Endothelial cell of umbilical vein (primary cell): ENCODE measurements at regions of chr2 and their contacts with region 1.

Region 1: GRCh38 chr2:56183643-56184499 is at the start of gene CCDC85A:
- DNase-seq: peak; percentile 86
- H3K4me3 ChIP-seq: peak within 1 kb of the TSS; percentile 50 to 92 (median 84)
- H3K27ac ChIP-seq: peak within 1 kb of the TSS; percentile 14
- H3K4me1 ChIP-seq: peaks cover 16% of the 10 kb centered on the region
- H3K27me3 ChIP-seq: no peaks in the 10 kb centered on the region
- CTCF ChIP-seq: peak; percentile 93 to 96
- POLR2A ChIP-seq: no peak
- total RNA-seq, gene CCDC85A: 10.4 and 16.9 TPM in 2 replicates

Region 2: GRCh38 chr2:56209701-56210100 is 25.8 kb after region 1 on chr2:
- CTCF ChIA-PET with region 1: no interaction called
- POLR2A ChIA-PET with region 1: no interaction called
- dilution Hi-C with region 1: no loop called
- intact Hi-C with region 1: no loop called
- DNase-seq: no peak
- H3K4me3 ChIP-seq: no peak overlapping the region
- H3K27ac ChIP-seq: no peak overlapping the region
- H3K4me1 ChIP-seq: peaks cover 18% of the 10 kb centered on the region
- H3K27me3 ChIP-seq: no peaks in the 10 kb centered on the region
- CTCF ChIP-seq: no peak
- POLR2A ChIP-seq: no peak

Region 3: GRCh38 chr2:56288838-56289580 is 105.1 kb after region 1 on chr2:
- CTCF ChIA-PET with region 1: no interaction called
- POLR2A ChIA-PET with region 1: no interaction called
- dilution Hi-C with region 1: no loop called
- intact Hi-C with region 1: loop called (anchors 5 kb)
- DNase-seq: no peak
- H3K4me3 ChIP-seq: no peak overlapping the region
- H3K27ac ChIP-seq: no peak overlapping the region
- H3K4me1 ChIP-seq: peaks cover 9% of the 10 kb centered on the region
- H3K27me3 ChIP-seq: no peaks in the 10 kb centered on the region
- CTCF ChIP-seq: no peak
- POLR2A ChIP-seq: no peak

Region 4: DNA sequence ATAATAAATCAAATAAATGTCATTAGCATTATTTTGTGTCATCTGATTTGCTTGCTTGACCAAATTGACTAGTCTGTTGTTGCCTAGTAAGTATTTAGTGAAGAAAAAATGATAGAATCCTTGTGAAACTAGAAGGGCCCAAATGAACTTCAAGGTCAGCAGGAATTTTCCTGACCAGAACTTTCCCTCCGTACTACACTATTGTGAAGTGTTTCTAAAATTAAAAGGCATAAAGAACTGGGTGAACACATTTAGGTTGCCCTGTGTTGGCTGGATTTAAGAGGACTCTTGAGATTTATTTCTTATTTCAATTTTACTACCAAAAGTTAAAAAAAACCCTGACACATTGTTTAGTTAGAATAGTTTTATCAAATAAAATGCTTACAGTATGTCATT is 142.5 kb after region 1 on chr2:
- CTCF ChIA-PET with region 1: no interaction called
- POLR2A ChIA-PET with region 1: no interaction called
- dilution Hi-C with region 1: no loop called
- intact Hi-C with region 1: no loop called
- DNase-seq: no peak
- H3K4me3 ChIP-seq: no peak overlapping the region
- H3K27ac ChIP-seq: no peak overlapping the region
- H3K4me1 ChIP-seq: no peaks in the 10 kb centered on the region
- H3K27me3 ChIP-seq: no peaks in the 10 kb centered on the region
- CTCF ChIP-seq: no peak
- POLR2A ChIP-seq: no peak

Region 5: DNA sequence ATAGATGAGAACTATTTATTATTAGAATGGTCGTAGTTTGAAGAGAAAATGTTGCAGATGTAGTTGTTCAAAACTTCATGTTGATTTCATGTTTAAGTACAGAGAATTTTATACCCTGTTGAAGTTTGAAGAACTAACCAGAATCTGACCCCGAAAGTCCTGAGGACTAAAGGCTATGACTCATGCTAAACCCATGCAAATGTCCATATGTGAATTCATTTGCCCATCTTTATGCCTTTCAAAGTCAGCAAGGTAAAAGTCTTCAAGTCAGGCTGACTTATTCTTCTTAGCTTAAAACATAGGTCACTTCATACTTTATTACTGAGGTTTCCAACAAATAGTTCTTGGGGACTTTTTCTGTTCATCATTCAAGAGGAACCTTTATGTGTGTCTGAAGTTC is 185.4 kb after region 1 on chr2:
- CTCF ChIA-PET with region 1: no interaction called
- POLR2A ChIA-PET with region 1: no interaction called
- dilution Hi-C with region 1: no loop called
- intact Hi-C with region 1: no loop called
- DNase-seq: no peak
- H3K4me3 ChIP-seq: no peak overlapping the region
- H3K27ac ChIP-seq: no peak overlapping the region
- H3K4me1 ChIP-seq: peaks cover 3% of the 10 kb centered on the region
- H3K27me3 ChIP-seq: no peaks in the 10 kb centered on the region
- CTCF ChIP-seq: no peak
- POLR2A ChIP-seq: no peak

Region 6: GRCh38 chr2:56589835-56590234 is 406.0 kb after region 1 on chr2:
- CTCF ChIA-PET with region 1: no interaction called
- POLR2A ChIA-PET with region 1: no interaction called
- dilution Hi-C with region 1: no loop called
- intact Hi-C with region 1: loop called (anchors 10 kb)
- DNase-seq: no peak
- H3K4me3 ChIP-seq: no peak overlapping the region
- H3K27ac ChIP-seq: no peak overlapping the region
- H3K4me1 ChIP-seq: peaks cover 2% of the 10 kb centered on the region
- H3K27me3 ChIP-seq: no peaks in the 10 kb centered on the region
- CTCF ChIP-seq: no peak
- POLR2A ChIP-seq: no peak

Region 7: GRCh38 chr2:56741601-56742102 is 557.8 kb after region 1 on chr2:
- CTCF ChIA-PET with region 1: interaction called, 20 read pairs
- POLR2A ChIA-PET with region 1: no interaction called
- dilution Hi-C with region 1: no loop called
- intact Hi-C with region 1: no loop called
- DNase-seq: peak; percentile 67
- H3K4me3 ChIP-seq: no peak overlapping the region
- H3K27ac ChIP-seq: peak overlapping the region; percentile 12
- H3K4me1 ChIP-seq: no peaks in the 10 kb centered on the region
- H3K27me3 ChIP-seq: no peaks in the 10 kb centered on the region
- CTCF ChIP-seq: no peak
- POLR2A ChIP-seq: no peak

Region 8: DNA sequence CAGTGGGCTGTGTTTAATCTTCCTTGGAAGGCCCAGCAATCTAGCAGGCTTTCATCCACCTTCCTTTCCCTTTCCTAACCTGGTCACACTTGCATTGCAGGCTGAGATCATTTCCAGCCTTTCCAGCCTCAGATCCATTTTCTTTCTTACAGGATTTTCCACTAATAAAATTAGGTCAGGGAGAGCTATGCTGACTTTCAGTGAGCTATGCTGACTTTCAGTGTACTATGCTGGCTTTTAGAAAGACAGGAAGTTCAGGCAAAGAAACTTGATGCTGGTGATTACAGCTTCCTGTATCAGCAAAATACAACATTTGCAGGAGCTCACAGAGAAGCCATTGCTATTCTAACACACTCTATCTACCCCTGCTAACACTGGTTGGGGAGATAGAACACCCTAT is 734.9 kb after region 1 on chr2:
- CTCF ChIA-PET with region 1: no interaction called
- POLR2A ChIA-PET with region 1: no interaction called
- dilution Hi-C with region 1: no loop called
- intact Hi-C with region 1: loop called (anchors 5 kb)
- DNase-seq: no peak
- H3K4me3 ChIP-seq: no peak overlapping the region
- H3K27ac ChIP-seq: no peak overlapping the region
- H3K4me1 ChIP-seq: no peaks in the 10 kb centered on the region
- H3K27me3 ChIP-seq: no peaks in the 10 kb centered on the region
- CTCF ChIP-seq: no peak
- POLR2A ChIP-seq: no peak

Region 9: DNA sequence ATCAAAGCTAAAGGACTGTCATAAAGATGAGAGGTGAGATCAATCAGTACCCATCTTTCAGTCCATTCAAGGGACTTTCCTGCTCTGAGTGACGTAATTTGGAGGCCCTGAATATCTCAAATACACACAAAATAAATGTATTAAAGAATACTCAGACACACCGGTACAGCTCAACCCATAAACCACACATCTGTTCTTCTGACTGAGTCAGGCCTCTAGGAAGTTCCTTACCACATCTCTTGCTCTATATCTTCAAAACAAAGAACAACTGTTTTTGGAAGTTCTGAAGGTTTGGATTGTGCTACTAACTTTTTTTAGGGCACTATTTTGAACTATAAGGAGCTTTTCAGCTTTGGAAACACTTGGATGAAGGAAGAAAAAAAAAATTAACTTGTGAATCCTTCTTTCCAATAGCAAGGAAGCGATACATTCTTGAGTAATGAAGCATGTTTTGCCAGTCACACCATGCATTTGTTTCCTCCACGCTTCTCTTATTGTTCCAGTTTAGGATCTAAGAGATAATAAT is 996.2 kb after region 1 on chr2:
- CTCF ChIA-PET with region 1: interaction called, 12 read pairs
- POLR2A ChIA-PET with region 1: no interaction called
- dilution Hi-C with region 1: no loop called
- intact Hi-C with region 1: loop called (anchors 5 kb)
- DNase-seq: peak; percentile 90
- H3K4me3 ChIP-seq: no peak overlapping the region
- H3K27ac ChIP-seq: peak overlapping the region; percentile 95
- H3K4me1 ChIP-seq: peaks cover 42% of the 10 kb centered on the region
- H3K27me3 ChIP-seq: no peaks in the 10 kb centered on the region
- CTCF ChIP-seq: no peak
- POLR2A ChIP-seq: peak; percentile 44

Region 10: DNA sequence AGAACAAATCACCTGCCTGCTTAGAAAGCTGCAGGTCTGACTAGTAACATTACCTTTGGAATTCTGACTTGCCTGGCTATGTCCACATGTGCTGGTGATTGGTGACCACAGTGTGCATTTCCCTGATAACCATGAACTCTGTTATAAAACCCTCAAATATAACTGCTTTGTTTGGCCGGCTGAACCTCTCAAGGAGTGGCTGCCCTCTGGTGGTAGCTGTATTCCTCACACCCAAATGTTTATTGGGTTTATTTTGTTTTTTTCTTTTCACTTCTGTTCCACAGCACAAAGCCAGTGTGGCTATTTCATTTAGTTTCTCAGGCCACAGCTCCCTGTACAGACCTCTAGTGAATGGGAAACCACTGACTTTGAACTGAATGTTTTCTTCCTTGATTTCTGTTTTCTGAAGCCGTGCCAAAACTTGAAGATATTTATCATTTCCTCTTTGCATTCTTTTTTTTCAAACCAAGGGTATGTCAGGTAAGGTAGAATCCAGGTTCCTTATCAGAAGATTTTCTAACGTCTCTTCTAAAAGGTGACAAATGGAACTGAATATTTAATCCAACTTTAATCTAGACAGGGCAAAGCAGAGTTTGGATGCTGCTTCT is 1313.7 kb after region 1 on chr2:
- CTCF ChIA-PET with region 1: interaction called, 45 read pairs
- POLR2A ChIA-PET with region 1: no interaction called
- dilution Hi-C with region 1: no loop called
- intact Hi-C with region 1: loop called (anchors 1 kb)
- DNase-seq: peak; percentile 61
- H3K4me3 ChIP-seq: no peak overlapping the region
- H3K27ac ChIP-seq: no peak overlapping the region
- H3K4me1 ChIP-seq: no peaks in the 10 kb centered on the region
- H3K27me3 ChIP-seq: no peaks in the 10 kb centered on the region
- CTCF ChIP-seq: peak; percentile 65 to 66
- POLR2A ChIP-seq: no peak